PC-9 (cell line): ENCODE measurements at regions of chr6 and their contacts with region 1.

Region 1: DNA sequence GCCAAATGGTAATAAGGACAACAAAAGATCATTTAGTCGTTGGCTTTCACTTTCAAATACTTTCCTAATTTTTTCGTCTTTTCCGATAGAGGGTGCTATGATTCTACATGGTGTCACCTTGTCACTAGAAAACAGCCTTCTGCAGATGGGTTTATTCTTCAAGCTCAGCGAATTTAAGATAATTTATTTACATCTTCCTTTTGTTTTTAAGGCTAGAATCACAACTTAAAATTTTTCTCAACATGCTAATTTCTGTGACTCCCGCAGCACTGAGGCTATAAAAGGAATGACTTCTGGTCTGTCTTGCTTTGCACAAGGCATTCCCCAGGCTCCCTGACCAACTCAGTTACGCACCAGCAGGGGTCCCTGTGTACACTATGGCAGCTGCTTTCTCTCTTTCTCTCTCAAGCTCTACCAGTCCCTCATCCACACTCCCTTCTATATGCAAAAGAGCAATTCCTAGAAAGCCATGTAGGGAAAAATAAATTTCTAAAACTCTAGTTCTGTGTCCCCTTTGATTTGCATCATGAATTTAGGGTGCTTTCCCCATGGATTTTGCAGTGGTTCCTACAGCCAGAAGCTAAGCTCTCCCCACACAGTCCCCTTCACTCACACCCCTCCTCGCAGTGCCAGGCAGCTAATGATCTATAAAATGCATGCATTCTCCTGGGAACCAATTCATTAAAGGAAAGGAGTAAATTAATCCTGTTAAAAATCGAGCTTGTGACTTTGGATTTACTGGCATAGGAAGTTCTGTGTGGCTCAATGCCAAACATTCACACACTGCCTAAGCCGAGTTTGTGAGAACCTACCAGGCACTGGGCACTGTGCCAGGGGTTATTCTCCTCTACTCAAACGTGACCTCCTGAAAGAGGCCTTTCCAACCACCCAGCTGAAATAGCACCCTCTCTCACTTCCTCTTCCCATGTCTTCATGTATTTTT is 74.5 kb downstream of the DCDC2 start:
- DNase-seq: peak; percentile 71 to 80
- H3K4me3 ChIP-seq: peak overlapping the region; percentile 6; the same call in 1 of the 2 replicates
- H3K27ac ChIP-seq: no peak overlapping the region
- H3K4me1 ChIP-seq: peaks cover 6% of the 10 kb centered on the region
- H3K27me3 ChIP-seq: no peaks in the 10 kb centered on the region
- CTCF ChIP-seq: peak; percentile 89

Region 2: GRCh38 chr6:24332306-24332705 is 49.0 kb after region 1 on chr6:
- CTCF ChIA-PET with region 1: interaction called, 3 read pairs
- POLR2A ChIA-PET with region 1: no interaction called
- intact Hi-C with region 1: loop called (anchors 1 kb)
- DNase-seq: peak; percentile 69 to 93
- H3K4me3 ChIP-seq: no peak overlapping the region
- H3K27ac ChIP-seq: peak overlapping the region; percentile 55
- H3K4me1 ChIP-seq: peaks cover 16% of the 10 kb centered on the region
- H3K27me3 ChIP-seq: no peaks in the 10 kb centered on the region
- CTCF ChIP-seq: no peak

Region 3: GRCh38 chr6:24391756-24392405 is 108.6 kb after region 1 on chr6:
- CTCF ChIA-PET with region 1: interaction called, 62 read pairs
- POLR2A ChIA-PET with region 1: interaction called, 4 read pairs
- intact Hi-C with region 1: loop called (anchors 1 kb)
- DNase-seq: no peak
- H3K4me3 ChIP-seq: no peak overlapping the region
- H3K27ac ChIP-seq: no peak overlapping the region
- H3K4me1 ChIP-seq: peaks cover 12% of the 10 kb centered on the region
- H3K27me3 ChIP-seq: no peaks in the 10 kb centered on the region
- CTCF ChIP-seq: no peak

Region 4: GRCh38 chr6:24520929-24521546 is 237.7 kb after region 1 on chr6:
- CTCF ChIA-PET with region 1: interaction called, 6 read pairs
- POLR2A ChIA-PET with region 1: no interaction called
- intact Hi-C with region 1: loop called (anchors 5 kb)
- DNase-seq: peak in 1 of 2 experiments; percentile 55
- H3K4me3 ChIP-seq: no peak overlapping the region
- H3K27ac ChIP-seq: no peak overlapping the region
- H3K4me1 ChIP-seq: no peaks in the 10 kb centered on the region
- H3K27me3 ChIP-seq: no peaks in the 10 kb centered on the region
- CTCF ChIP-seq: peak; percentile 72

Region 5: GRCh38 chr6:24566020-24566767 is 282.9 kb after region 1 on chr6:
- CTCF ChIA-PET with region 1: no interaction called
- POLR2A ChIA-PET with region 1: no interaction called
- intact Hi-C with region 1: no loop called
- DNase-seq: no peak
- H3K4me3 ChIP-seq: no peak overlapping the region
- H3K27ac ChIP-seq: no peak overlapping the region
- H3K4me1 ChIP-seq: no peaks in the 10 kb centered on the region
- H3K27me3 ChIP-seq: no peaks in the 10 kb centered on the region
- CTCF ChIP-seq: no peak